Prostate gland (tissue), 2 donors: ENCODE measurements at regions of chr6 and their contacts with region 1.

Region 1: DNA sequence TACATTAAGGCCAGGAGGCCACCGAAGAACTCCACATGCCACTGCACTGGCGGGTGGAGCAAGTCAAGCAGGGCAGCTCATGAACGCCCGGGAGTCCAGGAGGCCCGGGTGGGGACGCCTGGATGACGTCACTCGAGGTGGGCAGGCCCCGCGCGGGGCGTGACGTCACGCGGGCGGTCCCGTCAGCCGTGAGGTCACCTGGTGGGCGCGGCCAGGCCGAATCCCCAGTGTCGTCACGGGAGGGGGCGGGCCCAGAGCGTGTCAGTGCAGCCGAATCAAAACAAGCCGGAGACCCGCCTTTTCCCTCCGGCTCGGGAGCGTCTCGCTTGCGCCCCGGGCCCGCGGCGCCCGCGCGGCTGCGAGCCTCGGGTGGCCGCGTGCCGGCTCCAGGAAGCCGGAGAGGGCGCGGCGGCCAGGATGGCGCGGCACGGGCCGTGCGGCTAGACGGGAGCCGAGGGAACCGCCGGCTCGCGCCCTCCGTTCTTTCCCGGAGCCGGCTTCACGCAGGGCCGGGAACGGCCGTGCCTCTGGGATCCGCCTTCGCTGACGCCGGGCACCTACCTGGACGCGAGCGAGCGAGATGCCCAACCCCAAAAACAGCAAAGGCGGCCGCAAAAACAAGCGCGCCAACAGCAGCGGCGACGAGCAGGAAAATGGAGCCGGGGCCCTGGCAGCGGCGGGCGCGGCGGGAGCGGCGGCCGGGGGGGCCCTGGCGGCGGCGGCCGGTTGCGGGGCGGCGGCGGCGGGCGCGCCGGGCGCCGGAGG is at the start of gene HECA:
- DNase-seq: peak; percentile 98
- H3K4me3 ChIP-seq: peak within 1 kb of the TSS; percentile 65 to 92
- H3K27ac ChIP-seq: peak within 1 kb of the TSS; percentile 87 to 94
- H3K4me1 ChIP-seq: no peaks in the 10 kb centered on the region
- H3K27me3 ChIP-seq: no peaks in the 10 kb centered on the region
- CTCF ChIP-seq: peak in 1 of 4 experiments; percentile 20
- POLR2A ChIP-seq: peak; percentile 94
- total RNA-seq, gene HECA: 26.0 to 45.9 TPM

Region 2: GRCh38 chr6:139028658-139029469 is 106.1 kb before region 1 on chr6 and contains the start of gene ABRACL:
- intact Hi-C with region 1: loop called (anchors 5 kb)
- DNase-seq: peak; percentile 69
- H3K4me3 ChIP-seq: peak within 1 kb of the TSS; percentile 62 to 87
- H3K27ac ChIP-seq: peak within 1 kb of the TSS; percentile 42 to 72
- H3K4me1 ChIP-seq: no peaks in the 10 kb centered on the region
- H3K27me3 ChIP-seq: no peaks in the 10 kb centered on the region
- CTCF ChIP-seq: no peak
- POLR2A ChIP-seq: no peak
- total RNA-seq, gene ABRACL: 13.0 to 52.8 TPM

Region 3: GRCh38 chr6:139050770-139051313 is 84.2 kb before region 1 on chr6:
- intact Hi-C with region 1: no loop called
- DNase-seq: no peak
- H3K4me3 ChIP-seq: no peak overlapping the region
- H3K27ac ChIP-seq: no peak overlapping the region
- H3K4me1 ChIP-seq: no peaks in the 10 kb centered on the region
- H3K27me3 ChIP-seq: no peaks in the 10 kb centered on the region
- CTCF ChIP-seq: no peak
- POLR2A ChIP-seq: no peak

Region 4: DNA sequence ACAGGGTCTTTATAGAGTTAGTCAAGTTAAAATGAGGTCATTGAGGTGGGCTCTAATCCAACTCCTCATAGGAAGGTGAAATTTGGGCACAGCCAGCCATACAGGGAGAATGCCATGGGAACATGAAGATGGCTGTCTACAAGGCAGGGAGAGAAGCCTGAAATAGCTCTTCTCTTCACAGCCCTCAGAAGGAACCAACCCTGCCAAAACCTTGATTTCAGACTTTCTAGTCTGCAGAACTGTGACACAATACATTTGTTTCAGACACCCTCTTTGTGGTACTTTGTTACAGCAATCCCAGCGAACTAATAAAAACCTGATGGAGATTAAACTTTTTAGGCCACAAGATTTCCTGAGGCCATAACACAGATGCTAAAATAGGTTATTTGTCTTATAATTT is 43.2 kb before region 1 on chr6:
- intact Hi-C with region 1: no loop called
- DNase-seq: no peak
- H3K4me3 ChIP-seq: no peak overlapping the region
- H3K27ac ChIP-seq: no peak overlapping the region
- H3K4me1 ChIP-seq: no peaks in the 10 kb centered on the region
- H3K27me3 ChIP-seq: no peaks in the 10 kb centered on the region
- CTCF ChIP-seq: no peak
- POLR2A ChIP-seq: no peak